GM13976 (cell line): ENCODE measurements at regions of chr9 and their contacts with region 1.

Region 1: DNA sequence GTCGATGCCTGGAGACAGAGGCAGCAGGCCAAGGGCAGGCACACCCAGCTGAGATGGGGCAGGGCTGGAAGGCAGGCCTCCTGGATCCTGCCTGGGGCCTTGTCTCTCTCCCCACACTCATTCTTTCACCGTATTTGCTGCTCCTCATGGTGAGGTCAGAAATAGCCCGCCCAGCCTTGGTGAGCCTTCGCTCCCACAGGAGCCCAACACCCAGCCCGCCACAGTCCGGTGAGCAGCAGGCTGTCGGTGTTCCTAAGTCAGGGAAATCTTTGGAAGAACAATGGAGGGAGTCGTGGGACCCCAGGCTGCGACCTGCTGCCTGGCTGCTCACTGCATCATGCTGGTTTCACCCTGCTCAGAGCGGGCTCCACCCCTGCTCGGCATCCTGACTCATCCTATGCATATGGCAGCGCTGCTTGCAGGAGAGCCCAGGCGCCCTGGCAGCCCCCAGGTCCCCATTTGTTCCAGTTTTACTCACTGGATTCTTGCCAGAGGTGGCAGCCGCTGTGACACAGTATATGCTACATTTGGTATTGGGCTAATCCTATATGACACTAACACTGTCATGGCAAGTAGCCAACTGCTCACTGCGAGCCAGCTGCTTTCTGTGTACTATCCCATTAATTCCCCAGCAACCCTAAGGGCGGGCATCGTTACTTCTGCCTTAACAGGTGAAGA is 53.2 kb upstream of the NCS1 start:
- DNase-seq: no peak
- CTCF ChIP-seq: no peak

Region 2: GRCh38 chr9:130215341-130216119 is 96.5 kb after region 1 on chr9:
- in situ Hi-C with region 1: no loop called
- DNase-seq: no peak
- CTCF ChIP-seq: no peak

Region 3: GRCh38 chr9:130235897-130236668 is 117.1 kb after region 1 on chr9:
- in situ Hi-C with region 1: loop called (anchors 10 kb)
- DNase-seq: peak; percentile 83
- CTCF ChIP-seq: peak; percentile 98

Region 4: DNA sequence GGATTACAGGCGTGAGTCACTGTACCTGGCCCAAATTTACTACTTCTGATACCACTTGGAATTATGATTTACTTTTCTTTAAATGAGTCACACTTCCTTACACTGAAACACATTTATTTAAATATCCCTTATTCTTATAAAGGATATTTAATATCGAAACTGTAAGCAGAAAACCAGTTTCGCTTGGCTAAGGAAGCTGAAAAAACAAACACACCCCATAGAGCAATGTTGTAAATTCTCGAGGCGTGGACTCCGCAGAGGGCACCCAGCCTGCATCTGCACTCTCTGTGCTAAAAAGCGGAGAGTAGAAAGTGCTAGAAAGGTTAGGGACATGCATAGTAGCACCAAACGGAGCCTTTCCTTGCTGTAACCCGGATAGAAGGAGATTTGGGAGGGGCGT is 233.1 kb after region 1 on chr9:
- in situ Hi-C with region 1: no loop called
- DNase-seq: no peak
- CTCF ChIP-seq: no peak